Lower leg skin (tissue), 4 donors: ENCODE measurements at regions of chr6 and their contacts with region 1.

Region 1: GRCh38 chr6:166633732-166634535 is 6.9 kb upstream of the RPS6KA2 start:
- DNase-seq: peak; percentile 75 to 84
- H3K4me3 ChIP-seq: no peak overlapping the region
- CTCF ChIP-seq: no peak
- POLR2A ChIP-seq: no peak

Region 2: GRCh38 chr6:168029459-168030217 is 1395.7 kb after region 1 on chr6:
- intact Hi-C with region 1: loop called (anchors 10 kb)
- DNase-seq: peak; percentile 13 to 77
- H3K4me3 ChIP-seq: no peak overlapping the region
- CTCF ChIP-seq: no peak
- POLR2A ChIP-seq: no peak